CD8-positive, alpha-beta T cell (primary cell): ENCODE measurements at regions of chrX and their contacts with region 1.

Region 1: GRCh38 chrX:27462956-27463586 is at the start of gene PPP4R3C:
- DNase-seq: no peak
- ATAC-seq: no peak
- H3K4me3 ChIP-seq: no peak within 1 kb of the TSS
- H3K4me3 Mint-ChIP-seq: no peak within 1 kb of the TSS
- H3K27ac ChIP-seq: no peak within 1 kb of the TSS
- H3K27ac Mint-ChIP-seq: no peak within 1 kb of the TSS
- H3K4me1 ChIP-seq: no peaks in the 10 kb centered on the region
- H3K4me1 Mint-ChIP-seq: no peaks in the 10 kb centered on the region
- H3K27me3 ChIP-seq: no peaks in the 10 kb centered on the region
- H3K27me3 Mint-ChIP-seq: no peaks in the 10 kb centered on the region
- CTCF ChIP-seq: no peak
- total RNA-seq, gene PPP4R3C: not detected

Region 2: GRCh38 chrX:27680726-27681125 is 217.7 kb after region 1 on chrX:
- CTCF ChIA-PET with region 1: no interaction called
- POLR2A ChIA-PET with region 1: no interaction called
- intact Hi-C with region 1: loop called in 1 of 2 experiments (anchors 5 kb)
- DNase-seq: no peak
- ATAC-seq: no peak
- H3K4me3 ChIP-seq: no peak overlapping the region
- H3K4me3 Mint-ChIP-seq: no peak overlapping the region
- H3K27ac ChIP-seq: no peak overlapping the region
- H3K27ac Mint-ChIP-seq: no peak overlapping the region
- H3K4me1 ChIP-seq: no peaks in the 10 kb centered on the region
- H3K4me1 Mint-ChIP-seq: no peaks in the 10 kb centered on the region
- H3K27me3 ChIP-seq: no peaks in the 10 kb centered on the region
- H3K27me3 Mint-ChIP-seq: no peaks in the 10 kb centered on the region
- CTCF ChIP-seq: no peak